HCT116 (cell line): ENCODE measurements at regions of chr10 and their contacts with region 1.

Region 1: GRCh38 chr10:119445311-119445934 is 97.1 kb downstream of the RGS10 start:
- DNase-seq: peak; percentile 70
- ATAC-seq: peak; percentile 88
- H3K4me3 ChIP-seq: no peak overlapping the region
- H3K27ac ChIP-seq: no peak overlapping the region
- H3K4me1 ChIP-seq: peaks cover 7 to 12% of the 10 kb centered on the region in 2 experiments
- H3K27me3 ChIP-seq: no peaks in the 10 kb centered on the region
- CTCF ChIP-seq: peak; percentile 94 to 100 (median 99)
- POLR2A ChIP-seq: no peak
- RAD21 ChIP-seq: peak; percentile 96

Region 2: GRCh38 chr10:119416855-119417254 is 28.6 kb before region 1 on chr10:
- CTCF ChIA-PET with region 1: interaction called, 12 read pairs
- POLR2A ChIA-PET with region 1: no interaction called
- RAD21 ChIA-PET with region 1: no interaction called
- intact Hi-C with region 1: no loop called
- DNase-seq: peak; percentile 58
- ATAC-seq: peak; percentile 96
- H3K4me3 ChIP-seq: no peak overlapping the region
- H3K27ac ChIP-seq: no peak overlapping the region
- H3K4me1 ChIP-seq: peaks cover 0 to 3% of the 10 kb centered on the region in 2 experiments; a peak in 1 of 4 replicates
- H3K27me3 ChIP-seq: no peaks in the 10 kb centered on the region
- CTCF ChIP-seq: peak; percentile 96 to 98 (median 97)
- POLR2A ChIP-seq: no peak
- RAD21 ChIP-seq: peak; percentile 100

Region 3: DNA sequence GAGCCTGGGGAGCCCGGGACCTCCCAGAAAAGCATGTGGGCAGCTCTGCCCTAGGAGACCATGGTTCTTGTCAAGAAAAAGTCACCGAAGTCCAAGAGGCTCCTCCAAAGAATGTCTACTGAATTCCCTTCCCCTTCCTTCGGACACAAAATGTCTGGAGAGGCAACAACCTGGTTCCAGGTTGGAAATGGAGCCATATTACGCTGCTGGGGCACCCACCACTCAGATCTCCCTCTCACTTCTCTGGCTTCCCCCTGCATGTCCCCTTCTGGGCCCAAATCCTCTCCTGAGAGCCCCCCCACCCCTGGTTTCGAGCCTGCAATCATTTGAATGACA is 44.5 kb after region 1 on chr10:
- CTCF ChIA-PET with region 1: interaction called, 18 read pairs
- POLR2A ChIA-PET with region 1: no interaction called
- RAD21 ChIA-PET with region 1: interaction called, 3 to 7 read pairs
- intact Hi-C with region 1: loop called (anchors 1 kb)
- DNase-seq: no peak
- ATAC-seq: peak; percentile 9; the same call in 1 of the 2 replicates
- H3K4me3 ChIP-seq: peak overlapping the region in 1 of 2 experiments; percentile 56; a peak in 2 of 4 replicates
- H3K27ac ChIP-seq: no peak overlapping the region
- H3K4me1 ChIP-seq: peaks cover 0 to 10% of the 10 kb centered on the region in 2 experiments; a peak in 3 of 4 replicates
- H3K27me3 ChIP-seq: no peaks in the 10 kb centered on the region
- CTCF ChIP-seq: no peak
- POLR2A ChIP-seq: no peak
- RAD21 ChIP-seq: no peak